ENCODE measurements at regions of chr5 and their contacts with region 1.

Region 1: GRCh38 chr5:87383216-87383615 is 29.5 kb downstream of the CCNH start:
- DNase-seq: no peak
- ATAC-seq: no peak
- H3K4me3 ChIP-seq: no peak overlapping the region
- H3K4me3 Mint-ChIP-seq: no peak overlapping the region
- H3K27ac ChIP-seq: no peak overlapping the region
- H3K27ac Mint-ChIP-seq: no peak overlapping the region
- H3K4me1 ChIP-seq: no peaks in the 10 kb centered on the region
- H3K4me1 Mint-ChIP-seq: peaks cover 17% of the 10 kb centered on the region
- H3K27me3 ChIP-seq: no peaks in the 10 kb centered on the region
- H3K27me3 Mint-ChIP-seq: no peaks in the 10 kb centered on the region
- CTCF ChIP-seq: no peak

Region 2: GRCh38 chr5:87372705-87373104 is 10.5 kb before region 1 on chr5:
- CTCF ChIA-PET with region 1: no interaction called
- POLR2A ChIA-PET with region 1: interaction called, 3 read pairs
- intact Hi-C with region 1: loop called in 1 of 2 experiments (anchors 1 kb)
- DNase-seq: no peak
- ATAC-seq: no peak
- H3K4me3 ChIP-seq: no peak overlapping the region
- H3K4me3 Mint-ChIP-seq: no peak overlapping the region
- H3K27ac ChIP-seq: no peak overlapping the region
- H3K27ac Mint-ChIP-seq: no peak overlapping the region
- H3K4me1 ChIP-seq: no peaks in the 10 kb centered on the region
- H3K4me1 Mint-ChIP-seq: peaks cover 2% of the 10 kb centered on the region
- H3K27me3 ChIP-seq: no peaks in the 10 kb centered on the region
- H3K27me3 Mint-ChIP-seq: no peaks in the 10 kb centered on the region
- CTCF ChIP-seq: no peak

Region 3: GRCh38 chr5:87393331-87393730 is 10.1 kb after region 1 on chr5:
- CTCF ChIA-PET with region 1: no interaction called
- POLR2A ChIA-PET with region 1: no interaction called
- intact Hi-C with region 1: loop called (anchors 1 to 2 kb)
- DNase-seq: no peak
- ATAC-seq: no peak
- H3K4me3 ChIP-seq: no peak overlapping the region
- H3K4me3 Mint-ChIP-seq: no peak overlapping the region
- H3K27ac ChIP-seq: no peak overlapping the region
- H3K27ac Mint-ChIP-seq: no peak overlapping the region
- H3K4me1 ChIP-seq: no peaks in the 10 kb centered on the region
- H3K4me1 Mint-ChIP-seq: peaks cover 29% of the 10 kb centered on the region
- H3K27me3 ChIP-seq: no peaks in the 10 kb centered on the region
- H3K27me3 Mint-ChIP-seq: no peaks in the 10 kb centered on the region
- CTCF ChIP-seq: no peak

Measured in CD8-positive, alpha-beta T cell (primary cell).